Activated B cell treated with CpG ODN at 0.5 μM for 24 hours (primary cell): ENCODE measurements at regions of chr4 and their contacts with region 1.

Region 1: GRCh38 chr4:113738251-113738650 is 23.3 kb downstream of the CAMK2D start:
- DNase-seq: no peak
- ATAC-seq: no peak
- H3K4me3 Mint-ChIP-seq: no peak overlapping the region
- H3K27ac Mint-ChIP-seq: peak overlapping the region; percentile 44
- H3K4me1 Mint-ChIP-seq: peaks cover 66% of the 10 kb centered on the region
- H3K27me3 Mint-ChIP-seq: no peaks in the 10 kb centered on the region
- CTCF ChIP-seq: no peak

Region 2: GRCh38 chr4:113725963-113726362 is 12.3 kb before region 1 on chr4:
- CTCF ChIA-PET with region 1: no interaction called
- POLR2A ChIA-PET with region 1: interaction called, 3 read pairs
- intact Hi-C with region 1: loop called (anchors 2 kb)
- DNase-seq: no peak
- ATAC-seq: no peak
- H3K4me3 Mint-ChIP-seq: no peak overlapping the region
- H3K27ac Mint-ChIP-seq: peak overlapping the region; percentile 12
- H3K4me1 Mint-ChIP-seq: peaks cover 69% of the 10 kb centered on the region
- H3K27me3 Mint-ChIP-seq: no peaks in the 10 kb centered on the region
- CTCF ChIP-seq: no peak